Right ventricle myocardium superior (tissue), 1 donor: ENCODE measurements at regions of chr14 and their contacts with region 1.

Region 1: GRCh38 chr14:73058224-73058921 is at the start of gene RBM25:
- DNase-seq: peak; percentile 98
- ATAC-seq: peak; percentile 99
- total RNA-seq, gene RBM25: 29.3 TPM

Region 2: DNA sequence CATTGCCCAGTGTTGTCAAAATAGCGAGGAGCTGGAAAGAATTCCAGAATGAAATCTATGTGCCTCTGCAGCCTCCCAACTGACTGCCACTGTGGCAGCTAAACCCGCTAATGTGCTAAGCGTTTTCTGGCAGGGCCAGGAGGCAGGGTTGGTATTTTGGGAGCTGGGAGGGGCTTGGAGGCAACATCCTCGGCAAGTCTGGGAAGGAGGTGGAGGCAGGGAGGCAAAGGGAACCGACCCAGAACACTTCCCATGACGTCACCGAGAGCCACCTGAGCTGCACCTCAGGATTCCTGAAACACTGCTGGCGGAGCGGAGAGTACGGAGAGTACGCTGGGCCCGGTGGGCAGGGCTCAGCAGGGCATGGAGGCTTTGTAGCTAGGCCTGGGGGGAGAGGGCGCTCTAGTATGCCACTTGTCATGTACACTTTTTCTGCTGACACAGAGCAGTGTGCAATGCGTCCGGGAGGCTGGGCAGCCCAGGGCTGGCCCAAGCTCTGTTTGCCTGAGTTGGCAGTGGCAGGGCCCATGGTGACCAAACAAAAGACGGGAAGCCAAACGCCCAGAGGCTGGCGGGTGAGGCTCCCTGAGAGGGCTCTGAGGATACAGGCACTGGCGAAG is 246.0 kb before region 1 on chr14:
- intact Hi-C with region 1: no loop called
- DNase-seq: peak; percentile 83
- ATAC-seq: peak; percentile 91

Region 3: GRCh38 chr14:72965249-72965648 is 93.1 kb before region 1 on chr14:
- intact Hi-C with region 1: no loop called
- DNase-seq: no peak
- ATAC-seq: no peak

Region 4: DNA sequence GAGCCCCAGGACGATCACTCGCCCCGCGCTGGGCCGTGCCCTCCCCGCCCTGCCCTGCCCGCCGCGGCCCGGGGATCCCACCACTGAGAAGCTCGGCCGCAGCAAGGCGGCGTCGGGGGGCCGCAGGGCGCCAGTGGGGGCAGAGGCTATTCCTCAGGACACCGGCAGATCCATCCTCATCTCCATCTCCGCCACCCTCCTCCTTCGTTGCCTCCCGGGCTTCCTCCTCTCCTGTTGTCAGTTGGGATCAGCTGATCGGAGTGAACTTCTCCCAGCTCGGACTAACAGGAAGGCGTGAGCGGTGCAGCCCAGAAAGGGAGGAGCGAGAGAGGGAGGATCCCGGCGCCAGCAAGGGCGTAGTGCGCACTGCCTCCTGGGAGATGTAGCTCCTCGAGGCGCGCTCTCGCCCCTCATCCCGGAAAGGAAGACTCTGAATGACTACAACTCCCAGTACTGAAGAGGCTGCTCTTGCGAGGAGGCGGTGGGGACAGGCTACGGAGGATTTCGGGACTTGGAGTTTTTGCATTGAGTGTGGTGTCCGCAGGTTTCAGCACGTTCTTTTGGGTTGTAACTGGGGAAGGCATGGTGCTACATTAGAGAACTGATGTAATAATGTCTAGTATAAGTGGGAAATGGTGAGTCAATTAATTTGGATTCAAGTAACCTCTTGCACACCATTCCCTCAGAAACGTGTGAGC is 31.4 kb before region 1 on chr14 and contains the start of gene ZFYVE1:
- intact Hi-C with region 1: loop called (anchors 2 kb)
- DNase-seq: peak; percentile 98
- ATAC-seq: peak; percentile 99
- total RNA-seq, gene ZFYVE1: 12.9 TPM

Region 5: GRCh38 chr14:73125169-73125588 is 66.8 kb after region 1 on chr14:
- intact Hi-C with region 1: no loop called
- DNase-seq: no peak
- ATAC-seq: no peak